IMR-90 (cell line): ENCODE measurements at regions of chr2 and their contacts with region 1.

Region 1: GRCh38 chr2:45089554-45090261 is 80.5 kb upstream of the SIX2 start:
- DNase-seq: no peak
- ATAC-seq: no peak
- H3K4me3 ChIP-seq: no peak overlapping the region
- H3K27ac ChIP-seq: no peak overlapping the region
- H3K4me1 ChIP-seq: no peaks in the 10 kb centered on the region
- H3K27me3 ChIP-seq: peaks cover 25% of the 10 kb centered on the region
- CTCF ChIP-seq: no peak
- POLR2A ChIP-seq: no peak
- RAD21 ChIP-seq: no peak

Region 2: DNA sequence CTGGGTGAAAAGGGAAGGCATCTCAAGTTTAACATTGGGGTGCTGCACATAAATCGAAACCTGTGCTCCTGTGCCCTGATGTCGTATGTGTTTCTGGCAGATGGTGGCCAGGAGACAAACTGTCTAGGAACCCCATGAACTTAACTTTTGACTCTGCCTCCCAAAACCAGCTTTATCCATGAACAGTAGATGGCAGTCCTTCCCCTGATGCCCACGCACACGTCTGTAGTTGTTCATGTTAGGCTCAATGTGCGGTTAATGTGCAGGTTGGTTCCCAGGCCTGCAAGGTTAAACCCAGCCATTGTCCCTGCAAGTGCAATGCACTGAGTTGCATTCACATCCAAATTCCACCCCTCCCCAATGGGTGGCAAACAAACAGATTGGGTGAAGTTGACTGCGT is 192.3 kb before region 1 on chr2:
- CTCF ChIA-PET with region 1: no interaction called
- POLR2A ChIA-PET with region 1: no interaction called
- dilution Hi-C with region 1: no loop called
- in situ Hi-C with region 1: no loop called
- intact Hi-C with region 1: no loop called
- DNase-seq: no peak
- ATAC-seq: no peak
- H3K4me3 ChIP-seq: no peak overlapping the region
- H3K27ac ChIP-seq: no peak overlapping the region
- H3K4me1 ChIP-seq: no peaks in the 10 kb centered on the region
- H3K27me3 ChIP-seq: peaks cover 12% of the 10 kb centered on the region
- CTCF ChIP-seq: no peak
- POLR2A ChIP-seq: no peak
- RAD21 ChIP-seq: no peak

Region 3: DNA sequence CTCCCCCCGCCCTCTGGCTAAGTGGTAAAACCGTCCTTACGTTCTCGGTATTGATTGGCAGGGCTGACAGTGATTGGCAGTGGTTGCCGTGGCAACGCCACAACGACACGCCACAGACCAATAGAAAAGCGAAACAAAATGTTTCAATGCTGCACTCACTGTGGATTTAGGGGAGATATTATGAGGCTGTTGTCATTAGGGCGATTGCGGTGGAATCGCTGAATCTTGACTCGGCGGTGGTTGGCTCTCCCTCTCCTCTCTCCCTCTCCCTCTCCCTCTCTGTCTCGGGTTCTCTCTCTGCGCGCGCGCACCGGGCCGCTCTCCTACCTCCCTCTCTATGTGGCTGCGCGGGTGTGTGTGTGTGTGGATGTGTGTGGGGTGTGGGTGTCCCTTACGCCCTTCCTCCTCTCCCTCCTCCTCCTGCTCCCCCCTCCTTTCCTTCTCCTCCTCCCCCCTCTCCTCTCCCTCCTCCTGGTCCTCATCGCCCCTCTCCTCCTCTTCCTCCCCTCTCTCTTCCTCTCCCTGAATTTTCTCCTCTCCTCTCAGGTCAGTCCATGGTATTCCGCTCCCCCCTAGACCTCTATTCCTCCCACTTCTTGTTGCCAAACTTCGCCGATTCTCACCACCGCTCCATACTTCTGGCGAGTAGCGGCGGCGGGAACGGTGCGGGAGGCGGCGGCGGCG is 148.0 kb before region 1 on chr2 and contains the start of gene SIX3:
- CTCF ChIA-PET with region 1: no interaction called
- POLR2A ChIA-PET with region 1: no interaction called
- dilution Hi-C with region 1: no loop called
- in situ Hi-C with region 1: no loop called
- intact Hi-C with region 1: no loop called
- DNase-seq: no peak
- ATAC-seq: peak; percentile 31; the same call in 1 of the 2 replicates
- H3K4me3 ChIP-seq: no peak within 1 kb of the TSS; the same call in 1 of the 2 replicates
- H3K27ac ChIP-seq: no peak within 1 kb of the TSS
- H3K4me1 ChIP-seq: no peaks in the 10 kb centered on the region; the same call in 1 of the 2 replicates
- H3K27me3 ChIP-seq: peaks cover 98% of the 10 kb centered on the region
- CTCF ChIP-seq: no peak
- POLR2A ChIP-seq: no peak
- RAD21 ChIP-seq: no peak
- total RNA-seq, gene SIX3: not detected in 2 replicates

Region 4: GRCh38 chr2:45046786-45047185 is 42.9 kb before region 1 on chr2:
- CTCF ChIA-PET with region 1: no interaction called
- POLR2A ChIA-PET with region 1: no interaction called
- dilution Hi-C with region 1: no loop called
- in situ Hi-C with region 1: no loop called
- intact Hi-C with region 1: loop called (anchors 10 kb)
- DNase-seq: no peak
- ATAC-seq: no peak
- H3K4me3 ChIP-seq: no peak overlapping the region
- H3K27ac ChIP-seq: no peak overlapping the region
- H3K4me1 ChIP-seq: no peaks in the 10 kb centered on the region
- H3K27me3 ChIP-seq: peaks cover 43% of the 10 kb centered on the region
- CTCF ChIP-seq: no peak
- POLR2A ChIP-seq: no peak
- RAD21 ChIP-seq: no peak

Region 5: GRCh38 chr2:45458909-45459563 is 369.3 kb after region 1 on chr2:
- CTCF ChIA-PET with region 1: no interaction called
- POLR2A ChIA-PET with region 1: no interaction called
- dilution Hi-C with region 1: no loop called
- in situ Hi-C with region 1: no loop called
- intact Hi-C with region 1: no loop called
- DNase-seq: peak; percentile 64
- ATAC-seq: peak; percentile 87
- H3K4me3 ChIP-seq: no peak overlapping the region
- H3K27ac ChIP-seq: no peak overlapping the region
- H3K4me1 ChIP-seq: no peaks in the 10 kb centered on the region
- H3K27me3 ChIP-seq: no peaks in the 10 kb centered on the region
- CTCF ChIP-seq: no peak
- POLR2A ChIP-seq: no peak
- RAD21 ChIP-seq: no peak

Region 6: DNA sequence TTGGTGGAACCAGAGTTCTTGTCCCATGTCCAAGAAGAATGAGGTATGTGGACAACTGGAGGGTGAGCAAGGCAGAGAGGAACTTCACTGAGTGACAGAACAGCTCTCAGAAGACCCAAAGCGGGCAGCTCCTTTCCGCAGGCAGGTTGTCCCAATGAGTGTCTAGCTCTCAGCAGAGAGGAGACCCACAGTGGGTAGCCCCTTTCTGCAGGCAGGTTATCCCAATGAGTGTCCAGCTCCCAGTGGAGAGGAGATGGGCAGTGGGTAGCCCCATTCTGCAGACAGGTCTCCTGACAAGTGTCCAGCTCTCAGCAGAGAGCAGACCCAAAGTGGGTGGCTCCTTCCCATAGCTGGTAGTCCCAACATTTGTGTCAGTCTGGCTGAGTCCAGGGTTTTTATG is 451.7 kb after region 1 on chr2:
- CTCF ChIA-PET with region 1: interaction called, 12 read pairs
- POLR2A ChIA-PET with region 1: no interaction called
- dilution Hi-C with region 1: no loop called
- in situ Hi-C with region 1: no loop called
- intact Hi-C with region 1: no loop called
- DNase-seq: no peak
- ATAC-seq: no peak
- H3K4me3 ChIP-seq: no peak overlapping the region
- H3K27ac ChIP-seq: no peak overlapping the region
- H3K4me1 ChIP-seq: no peaks in the 10 kb centered on the region
- H3K27me3 ChIP-seq: no peaks in the 10 kb centered on the region
- CTCF ChIP-seq: no peak
- POLR2A ChIP-seq: no peak
- RAD21 ChIP-seq: no peak